ENCODE measurements at regions of chr5 and their contacts with region 1.

Region 1: DNA sequence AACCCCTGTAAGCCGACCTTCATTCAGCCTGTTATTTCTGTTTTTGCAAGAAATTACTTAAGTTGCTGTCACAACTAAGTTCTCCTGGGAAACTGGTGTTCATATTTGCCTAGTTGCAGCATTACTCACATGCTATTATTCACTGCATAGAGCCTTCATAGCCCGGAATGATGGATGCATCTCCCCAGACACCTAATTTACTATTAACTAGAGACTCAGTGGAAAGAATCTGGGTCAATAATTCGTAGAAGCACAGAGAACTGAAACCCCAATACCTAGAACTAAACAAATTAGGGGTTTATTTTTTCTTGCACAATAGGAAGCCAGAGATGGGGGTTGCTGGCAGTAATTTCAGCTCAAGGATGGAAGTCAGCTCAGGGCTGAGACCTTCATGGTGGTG is 45.7 kb upstream of the FAM170A start:
- DNase-seq: no peak
- ATAC-seq: no peak
- H3K4me3 ChIP-seq: no peak overlapping the region
- H3K27ac ChIP-seq: no peak overlapping the region
- H3K4me1 ChIP-seq: no peaks in the 10 kb centered on the region
- H3K27me3 ChIP-seq: no peaks in the 10 kb centered on the region
- CTCF ChIP-seq: no peak
- EP300 ChIP-seq: no peak
- POLR2A ChIP-seq: no peak
- RAD21 ChIP-seq: no peak

Region 2: DNA sequence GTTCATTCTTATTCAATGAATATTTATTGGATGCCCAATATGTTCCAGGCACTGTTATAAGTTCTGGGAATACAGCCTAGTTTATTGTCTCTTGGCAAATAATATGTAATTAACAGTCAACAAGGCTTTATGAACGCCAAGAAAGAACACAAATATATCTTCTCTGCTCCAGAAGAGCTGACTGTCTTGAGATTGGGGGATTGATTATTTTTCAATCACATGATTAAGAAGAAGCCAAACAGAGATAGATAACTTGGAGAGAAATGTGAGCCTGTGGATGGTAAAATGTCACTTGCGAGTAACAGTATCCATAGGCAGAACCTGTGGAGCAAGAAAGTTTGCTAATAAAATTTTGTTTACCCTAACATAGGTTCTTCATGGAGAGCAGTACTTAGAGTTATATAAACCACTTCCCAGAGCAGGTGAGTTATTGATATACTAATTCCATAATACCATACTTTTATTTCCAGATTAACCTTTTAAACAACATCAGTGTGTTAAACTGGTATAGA is 82.0 kb before region 1 on chr5:
- CTCF ChIA-PET with region 1: no interaction called
- POLR2A ChIA-PET with region 1: no interaction called
- in situ Hi-C with region 1: no loop called
- intact Hi-C with region 1: no loop called
- DNase-seq: no peak
- ATAC-seq: no peak
- H3K4me3 ChIP-seq: no peak overlapping the region
- H3K27ac ChIP-seq: no peak overlapping the region
- H3K4me1 ChIP-seq: no peaks in the 10 kb centered on the region
- H3K27me3 ChIP-seq: no peaks in the 10 kb centered on the region
- CTCF ChIP-seq: no peak
- EP300 ChIP-seq: no peak
- POLR2A ChIP-seq: no peak
- RAD21 ChIP-seq: no peak

Region 3: DNA sequence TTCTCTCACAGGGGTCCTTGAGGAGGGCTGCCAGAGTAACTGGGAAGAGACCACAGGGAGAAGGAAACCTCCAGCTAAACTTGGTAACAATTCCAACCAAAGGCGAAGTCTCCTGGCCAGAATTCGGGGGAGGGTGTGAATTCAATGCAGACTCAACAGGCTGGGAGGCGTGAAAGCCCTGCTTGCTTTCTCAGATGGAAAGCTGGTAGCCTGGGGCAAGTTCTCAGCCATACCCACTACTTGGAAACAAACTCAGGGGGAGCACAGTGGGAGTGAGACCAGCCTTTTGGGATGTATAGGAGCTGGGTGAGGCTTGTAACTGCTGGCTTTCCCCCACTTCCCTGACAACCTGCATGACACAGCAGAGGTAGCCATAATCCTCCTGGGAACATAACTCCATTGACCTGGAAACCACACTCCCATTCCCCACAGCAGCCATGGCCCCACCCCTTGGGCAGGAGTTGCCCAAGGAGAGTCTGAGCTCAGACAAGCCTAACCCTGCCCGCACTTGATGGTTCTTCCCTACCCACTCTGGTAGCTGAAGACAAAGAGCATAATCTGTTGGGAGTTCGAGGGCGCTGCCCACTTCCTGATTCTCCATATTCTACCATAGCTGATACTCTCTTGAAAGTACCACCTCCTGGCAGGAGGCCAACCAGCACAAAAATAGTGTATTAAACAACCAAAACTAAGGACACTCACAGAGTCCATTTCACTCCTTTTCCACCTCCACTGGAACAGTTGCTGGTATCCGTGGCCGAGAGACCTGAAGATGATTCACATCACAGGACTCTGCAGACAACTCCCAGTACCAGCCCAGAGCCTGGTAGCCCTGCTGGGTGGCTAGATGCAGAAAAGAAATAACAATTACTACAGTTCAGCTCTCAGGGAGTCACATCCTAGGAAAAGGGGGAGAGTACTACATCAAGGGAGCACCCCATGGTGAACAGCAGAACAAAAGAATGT is 169.5 kb after region 1 on chr5:
- CTCF ChIA-PET with region 1: no interaction called
- POLR2A ChIA-PET with region 1: no interaction called
- in situ Hi-C with region 1: no loop called
- intact Hi-C with region 1: loop called (anchors 5 kb)
- DNase-seq: no peak
- ATAC-seq: no peak
- H3K4me3 ChIP-seq: no peak overlapping the region
- H3K27ac ChIP-seq: no peak overlapping the region
- H3K4me1 ChIP-seq: no peaks in the 10 kb centered on the region; a peak in 1 of 5 replicates
- H3K27me3 ChIP-seq: no peaks in the 10 kb centered on the region
- CTCF ChIP-seq: no peak
- EP300 ChIP-seq: no peak
- POLR2A ChIP-seq: no peak
- RAD21 ChIP-seq: no peak